Posterior cingulate gyrus (tissue), 11 donors: ENCODE measurements at regions of chr20 and their contacts with region 1.

Region 1: GRCh38 chr20:5191829-5192569 is 65.2 kb downstream of the CDS2 start:
- DNase-seq: peak in 3 of 10 donors; percentile 32 to 45 (median 43)

Region 2: GRCh38 chr20:5126512-5127203 is 65.3 kb before region 1 on chr20 and contains the start of gene CDS2:
- intact Hi-C with region 1: loop called (anchors 1 kb)
- DNase-seq: peak; percentile 100